K562 (cell line): ENCODE measurements at regions of chr3 and their contacts with region 1.

Region 1: GRCh38 chr3:111989061-111989678 is 9.6 kb upstream of the TAGLN3 start:
- DNase-seq: peak in 3 of 4 experiments; percentile 10 to 48 (median 10)
- ATAC-seq: peak; percentile 84
- H3K4me3 ChIP-seq: no peak overlapping the region
- H3K27ac ChIP-seq: no peak overlapping the region
- H3K4me1 ChIP-seq: no peaks in the 10 kb centered on the region
- H3K27me3 ChIP-seq: no peaks in the 10 kb centered on the region
- CTCF ChIP-seq: peak; percentile 28 to 57 (median 50); a peak in 4 of 6 replicates
- EP300 ChIP-seq: no peak
- POLR2A ChIP-seq: no peak
- RAD21 ChIP-seq: peak in 1 of 2 experiments; percentile 44; a peak in 1 of 4 replicates

Region 2: GRCh38 chr3:111978493-111979433 is 10.4 kb before region 1 on chr3 and contains the start of gene ABHD10:
- CTCF ChIA-PET with region 1: no interaction called
- POLR2A ChIA-PET with region 1: interaction called, 10 read pairs
- in situ Hi-C with region 1: no loop called
- intact Hi-C with region 1: no loop called
- DNase-seq: peak; percentile 77 to 95 (median 86)
- ATAC-seq: peak; percentile 98
- H3K4me3 ChIP-seq: peak within 1 kb of the TSS; percentile 55
- H3K27ac ChIP-seq: peak within 1 kb of the TSS; percentile 65
- H3K4me1 ChIP-seq: no peaks in the 10 kb centered on the region; a peak in 2 of 5 replicates
- H3K27me3 ChIP-seq: peaks cover 0 to 2% of the 10 kb centered on the region in 2 experiments; a peak in 1 of 5 replicates
- CTCF ChIP-seq: no peak
- EP300 ChIP-seq: no peak
- POLR2A ChIP-seq: peak; percentile 88
- RAD21 ChIP-seq: no peak
- polyA plus RNA-seq, gene ABHD10: 6.1 to 9.9 TPM

Region 3: GRCh38 chr3:112519424-112520001 is 530.3 kb after region 1 on chr3:
- CTCF ChIA-PET with region 1: no interaction called
- POLR2A ChIA-PET with region 1: no interaction called
- in situ Hi-C with region 1: no loop called
- intact Hi-C with region 1: no loop called
- DNase-seq: peak; percentile 14 to 41 (median 22)
- ATAC-seq: peak; percentile 91
- H3K4me3 ChIP-seq: no peak overlapping the region
- H3K27ac ChIP-seq: no peak overlapping the region
- H3K4me1 ChIP-seq: no peaks in the 10 kb centered on the region
- H3K27me3 ChIP-seq: no peaks in the 10 kb centered on the region
- CTCF ChIP-seq: peak; percentile 45 to 66 (median 47); a peak in 4 of 6 replicates
- EP300 ChIP-seq: no peak
- POLR2A ChIP-seq: no peak
- RAD21 ChIP-seq: peak; percentile 59 to 77